Left ventricle myocardium inferior (tissue), 1 donor: ENCODE measurements at regions of chr11 and their contacts with region 1.

Region 1: GRCh38 chr11:33869481-33870422 is 22.1 kb downstream of the LMO2 start:
- DNase-seq: peak; percentile 47
- H3K4me3 ChIP-seq: peak overlapping the region; percentile 78
- H3K27ac ChIP-seq: peak overlapping the region; percentile 91
- H3K4me1 ChIP-seq: peaks cover 47% of the 10 kb centered on the region
- H3K27me3 ChIP-seq: peaks cover 44% of the 10 kb centered on the region
- CTCF ChIP-seq: no peak

Region 2: DNA sequence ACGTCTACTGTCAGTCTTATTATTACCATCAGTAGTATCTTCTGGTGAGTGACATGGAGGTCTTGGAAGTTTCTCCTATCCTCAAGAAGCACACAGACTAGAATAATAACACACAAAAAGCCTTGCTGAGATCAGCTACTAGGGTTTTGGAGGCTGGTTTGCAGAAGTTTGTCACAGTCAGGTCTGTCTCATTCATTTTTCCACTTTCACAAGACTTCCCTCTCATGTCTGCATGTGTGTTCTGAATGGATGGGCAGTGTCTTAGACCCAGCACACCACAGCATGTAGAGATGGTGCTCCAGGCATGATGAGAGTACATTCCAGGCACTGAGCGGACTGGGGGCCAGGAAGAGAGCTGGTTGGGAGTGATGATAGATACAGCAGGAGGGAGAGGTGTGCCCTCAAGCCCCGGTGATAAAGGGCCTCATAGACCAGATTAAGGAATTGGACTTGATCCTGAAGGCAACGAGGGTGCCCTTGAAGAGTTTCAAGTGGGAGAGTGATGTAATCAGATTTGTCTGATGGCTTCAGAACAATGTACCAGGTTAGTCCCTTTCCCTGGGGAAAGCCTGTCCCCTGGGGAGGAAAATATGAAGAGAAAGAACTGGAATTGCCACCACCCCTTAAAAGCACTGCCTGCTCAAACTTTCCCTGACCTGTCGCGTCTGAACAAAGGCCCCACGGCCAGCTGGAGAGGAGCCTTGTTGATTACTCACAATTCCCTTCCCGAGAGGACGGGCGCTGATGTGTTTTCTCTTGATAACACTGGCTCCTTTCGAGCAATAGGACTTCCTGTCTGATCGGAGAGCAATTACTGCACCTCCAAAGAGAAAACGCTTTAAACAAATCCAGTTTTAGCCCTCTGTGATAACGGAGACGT is 67.2 kb after region 1 on chr11:
- intact Hi-C with region 1: loop called (anchors 10 kb)
- DNase-seq: peak; percentile 62
- H3K4me3 ChIP-seq: peak overlapping the region; percentile 1
- H3K27ac ChIP-seq: peak overlapping the region; percentile 56
- H3K4me1 ChIP-seq: peaks cover 60% of the 10 kb centered on the region
- H3K27me3 ChIP-seq: no peaks in the 10 kb centered on the region
- CTCF ChIP-seq: no peak